Mucosa of descending colon (tissue), 3 donors: ENCODE measurements at regions of chr3 and their contacts with region 1.

Region 1: DNA sequence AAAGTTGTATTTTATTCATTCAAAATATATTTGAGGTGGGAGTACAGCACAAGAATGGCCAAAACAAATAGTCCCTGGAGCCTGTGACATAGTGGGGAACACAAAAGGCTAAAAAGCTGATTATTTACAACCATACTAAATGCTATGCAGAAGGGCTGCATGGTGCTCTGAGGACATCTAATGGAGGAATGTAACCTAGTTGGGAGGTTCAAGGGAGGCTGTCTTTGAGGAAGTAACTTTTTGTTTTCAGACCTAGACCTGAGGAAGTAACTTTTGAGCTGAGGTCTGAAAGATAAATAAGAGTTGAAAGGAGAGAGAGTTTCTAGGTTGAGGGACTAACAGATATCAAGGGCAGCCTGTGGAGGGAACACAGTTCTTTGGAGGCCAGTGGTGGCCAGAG is 34.8 kb upstream of the RASA2 start:
- DNase-seq: peak in 1 of 3 donors; percentile 67
- ATAC-seq: peak; percentile 81
- H3K4me3 ChIP-seq: no peak overlapping the region
- H3K4me1 ChIP-seq: no peaks in the 10 kb centered on the region
- CTCF ChIP-seq: peak; percentile 15

Region 2: DNA sequence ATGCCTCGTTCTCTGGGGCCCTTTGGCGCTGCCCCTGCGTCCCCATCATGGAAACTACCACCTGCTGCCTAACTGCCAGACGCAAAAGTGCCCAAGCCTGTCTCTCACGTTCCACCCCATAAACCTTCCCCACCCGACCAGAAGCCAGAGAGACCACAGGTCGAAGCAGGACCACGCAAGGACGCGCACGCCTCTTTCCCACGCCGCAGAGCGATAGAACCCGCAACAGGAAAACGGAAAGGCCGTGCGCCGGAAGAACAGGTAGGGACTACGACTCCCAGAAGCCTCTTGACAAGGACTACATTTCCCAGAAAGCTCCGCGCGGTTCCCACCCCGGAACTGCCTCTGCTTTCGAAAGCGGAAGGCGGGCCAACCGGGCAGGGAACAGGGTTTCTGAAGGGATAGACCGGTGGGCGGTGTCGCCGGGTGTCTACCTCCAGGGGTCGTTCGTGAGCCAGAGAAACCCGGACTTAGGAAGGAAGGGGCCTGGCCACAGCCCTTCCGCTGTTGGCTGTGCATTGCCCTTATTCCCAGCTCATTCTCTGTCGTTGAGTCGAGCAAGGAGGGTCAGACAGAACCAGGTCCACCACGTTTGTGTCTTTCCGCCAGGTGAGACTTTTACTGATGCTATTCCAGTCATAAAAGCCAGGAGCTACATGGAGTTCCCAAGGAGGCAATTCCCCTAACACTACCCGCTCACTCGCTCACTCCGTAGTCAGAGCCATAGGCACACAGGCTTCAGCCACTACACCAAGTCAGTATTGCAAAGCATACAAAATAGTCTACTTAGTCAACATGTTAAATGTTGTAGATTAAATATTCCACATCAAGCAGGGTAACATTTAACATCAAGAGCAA is 140.3 kb before region 1 on chr3:
- intact Hi-C with region 1: loop called (anchors 5 kb)
- DNase-seq: peak; percentile 99
- ATAC-seq: peak; percentile 97
- H3K4me3 ChIP-seq: peak overlapping the region; percentile 20
- H3K4me1 ChIP-seq: no peaks in the 10 kb centered on the region
- CTCF ChIP-seq: peak; percentile 75

Region 3: GRCh38 chr3:141360888-141361598 is 91.0 kb before region 1 on chr3:
- intact Hi-C with region 1: loop called (anchors 5 kb)
- DNase-seq: no peak
- ATAC-seq: peak; percentile 90
- H3K4me3 ChIP-seq: peak overlapping the region; percentile 1
- H3K4me1 ChIP-seq: peaks cover 5% of the 10 kb centered on the region
- CTCF ChIP-seq: peak; percentile 44

Region 4: GRCh38 chr3:141561426-141562034 is 109.5 kb after region 1 on chr3:
- intact Hi-C with region 1: loop called in 1 of 2 experiments (anchors 5 kb)
- DNase-seq: peak in 1 of 3 donors; percentile 73
- ATAC-seq: peak; percentile 57
- H3K4me3 ChIP-seq: no peak overlapping the region
- H3K4me1 ChIP-seq: no peaks in the 10 kb centered on the region
- CTCF ChIP-seq: peak; percentile 78